Activated T-helper 1 cell treated with anti-CD3 and anti-CD28 coated beads, Interleukin-12 subunit alpha, Interleukin-12 subunit beta, Interleukin-2, Interleukin-4 antibody, amounts not matched to agents 30 ng/mL and 10 ng/mL and 1 ng/mL, durations not matched to agents 14 hours and 24 hours and 36 hours (primary cell): ENCODE measurements at regions of chr5 and their contacts with region 1.

Region 1: DNA sequence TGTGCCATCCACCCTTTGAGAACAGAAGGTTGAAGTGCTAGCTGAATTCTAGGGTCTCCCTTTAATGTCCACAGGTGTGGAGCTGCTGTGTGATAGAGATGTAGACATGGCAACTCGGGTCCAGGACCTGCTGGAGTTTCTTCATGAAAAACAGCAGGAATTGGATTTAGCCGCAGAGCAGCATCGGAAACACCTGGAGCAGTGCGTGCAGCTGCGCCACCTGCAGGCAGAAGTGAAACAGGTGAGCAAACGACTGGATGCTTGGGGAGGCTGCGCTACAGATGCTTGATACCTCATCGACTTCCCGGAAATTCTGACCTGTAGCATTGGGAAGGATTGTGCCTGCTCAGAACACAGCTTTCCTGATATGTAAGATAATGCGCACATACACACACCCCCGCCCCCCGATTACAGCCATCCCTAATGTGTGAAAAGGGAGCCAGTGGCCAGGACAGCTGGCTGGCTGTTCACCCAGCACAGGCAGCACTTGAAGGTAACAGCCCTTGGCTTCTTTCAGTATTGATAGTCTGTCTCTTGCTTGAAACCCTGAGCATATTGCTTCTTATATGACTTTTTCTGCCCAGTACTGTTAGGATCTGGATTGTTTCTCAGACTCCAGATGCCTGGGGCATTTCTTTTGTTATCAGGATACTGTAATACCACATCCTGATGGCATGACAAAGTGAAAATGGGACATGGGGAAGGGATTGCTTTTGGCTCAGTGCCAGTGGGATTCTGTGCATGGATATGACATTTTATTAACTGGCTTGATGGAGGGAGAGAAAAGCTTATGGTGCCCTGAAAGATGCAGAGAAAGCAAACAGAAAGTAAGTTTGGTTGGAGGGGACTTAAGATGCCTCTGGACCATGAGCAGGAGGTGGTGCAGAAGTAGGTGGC is 216.8 kb upstream of the OTULINL start:
- DNase-seq: no peak
- H3K4me3 Mint-ChIP-seq: no peak overlapping the region
- H3K27ac Mint-ChIP-seq: peak overlapping the region; percentile 24
- H3K4me1 Mint-ChIP-seq: peaks cover 54% of the 10 kb centered on the region
- H3K27me3 Mint-ChIP-seq: no peaks in the 10 kb centered on the region

Region 2: GRCh38 chr5:13972034-13972433 is 392.8 kb before region 1 on chr5:
- intact Hi-C with region 1: no loop called
- DNase-seq: no peak
- H3K4me3 Mint-ChIP-seq: no peak overlapping the region
- H3K27ac Mint-ChIP-seq: no peak overlapping the region
- H3K4me1 Mint-ChIP-seq: no peaks in the 10 kb centered on the region
- H3K27me3 Mint-ChIP-seq: peaks cover 2% of the 10 kb centered on the region

Region 3: GRCh38 chr5:13987843-13988464 is 376.9 kb before region 1 on chr5:
- intact Hi-C with region 1: loop called (anchors 5 kb)
- DNase-seq: no peak
- H3K4me3 Mint-ChIP-seq: no peak overlapping the region
- H3K27ac Mint-ChIP-seq: no peak overlapping the region
- H3K4me1 Mint-ChIP-seq: no peaks in the 10 kb centered on the region
- H3K27me3 Mint-ChIP-seq: peaks cover 11% of the 10 kb centered on the region

Region 4: DNA sequence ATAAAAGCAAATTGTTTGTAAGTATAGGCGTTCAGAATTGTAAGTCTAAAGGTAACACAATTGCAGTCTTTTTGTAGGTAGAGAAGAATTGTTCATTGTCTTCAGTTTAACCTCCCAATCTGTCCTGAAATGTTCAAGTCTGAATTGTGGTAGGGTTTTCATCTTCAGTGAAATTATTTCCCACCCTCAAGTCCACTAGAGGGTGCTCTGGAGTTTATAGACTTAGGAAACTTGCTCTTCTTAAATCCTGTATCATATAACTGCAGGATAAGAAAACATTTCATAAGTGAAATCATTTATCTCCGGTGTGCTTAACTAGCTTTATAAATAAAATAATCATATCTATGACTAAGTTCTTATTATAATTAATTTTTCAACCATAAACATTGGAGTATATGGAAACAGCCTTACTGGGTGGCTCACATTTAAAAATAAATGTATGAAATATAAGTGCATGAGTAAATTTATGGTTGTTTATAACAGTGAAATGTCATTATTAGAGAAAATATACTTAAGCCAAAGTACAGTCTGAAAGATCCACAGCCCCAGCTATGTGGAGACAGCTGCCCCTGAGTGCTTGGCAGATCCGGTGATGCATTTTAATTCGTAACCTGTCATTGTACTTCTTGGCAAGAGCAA is 34.3 kb after region 1 on chr5:
- intact Hi-C with region 1: loop called (anchors 1 kb)
- DNase-seq: no peak
- H3K4me3 Mint-ChIP-seq: no peak overlapping the region
- H3K27ac Mint-ChIP-seq: no peak overlapping the region
- H3K4me1 Mint-ChIP-seq: peaks cover 13% of the 10 kb centered on the region
- H3K27me3 Mint-ChIP-seq: peaks cover 1% of the 10 kb centered on the region

Region 5: GRCh38 chr5:14644623-14645237 is 279.9 kb after region 1 on chr5:
- intact Hi-C with region 1: loop called (anchors 1 kb)
- DNase-seq: no peak
- H3K4me3 Mint-ChIP-seq: no peak overlapping the region
- H3K27ac Mint-ChIP-seq: no peak overlapping the region
- H3K4me1 Mint-ChIP-seq: no peaks in the 10 kb centered on the region
- H3K27me3 Mint-ChIP-seq: peaks cover 17% of the 10 kb centered on the region

Region 6: GRCh38 chr5:15003511-15003920 is 638.7 kb after region 1 on chr5:
- intact Hi-C with region 1: loop called (anchors 2 kb)
- DNase-seq: peak; percentile 33
- H3K4me3 Mint-ChIP-seq: no peak overlapping the region
- H3K27ac Mint-ChIP-seq: no peak overlapping the region
- H3K4me1 Mint-ChIP-seq: peaks cover 20% of the 10 kb centered on the region
- H3K27me3 Mint-ChIP-seq: peaks cover 28% of the 10 kb centered on the region

Region 7: GRCh38 chr5:15587916-15588315 is 1223.1 kb after region 1 on chr5:
- intact Hi-C with region 1: no loop called
- DNase-seq: no peak
- H3K4me3 Mint-ChIP-seq: no peak overlapping the region
- H3K27ac Mint-ChIP-seq: no peak overlapping the region
- H3K4me1 Mint-ChIP-seq: no peaks in the 10 kb centered on the region
- H3K27me3 Mint-ChIP-seq: no peaks in the 10 kb centered on the region